IMR-90 (cell line): ENCODE measurements at regions of chr12 and their contacts with region 1.

Region 1: DNA sequence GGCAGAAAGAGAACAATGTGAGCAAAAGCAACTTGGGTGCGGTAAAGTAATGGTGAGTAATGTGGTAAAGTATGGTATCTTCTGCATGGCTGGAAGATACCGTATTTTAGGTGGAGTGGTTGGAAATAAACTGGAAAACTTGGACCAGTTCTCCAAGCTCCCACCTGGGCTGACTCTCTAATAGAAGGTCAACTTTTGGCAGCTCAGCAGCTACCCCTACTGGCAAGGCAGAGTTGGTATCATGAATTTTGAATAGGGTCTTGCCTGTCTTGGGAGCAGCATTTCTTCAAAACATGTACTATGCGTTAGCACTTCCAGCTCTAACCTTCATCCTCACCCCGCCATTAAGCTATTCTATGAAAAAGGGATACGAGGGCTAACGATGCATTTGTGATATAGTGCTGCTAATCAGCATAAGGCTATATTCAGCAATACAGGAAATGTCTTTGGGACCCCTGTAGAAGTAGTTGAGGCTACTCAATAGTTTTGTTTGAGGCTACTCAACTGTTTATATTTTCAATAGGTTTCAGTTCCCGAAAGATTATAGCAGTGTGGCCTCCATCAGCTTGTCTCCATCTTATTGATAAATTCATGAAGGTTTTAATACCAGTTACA is 276.3 kb upstream of the FAR2 start:
- DNase-seq: peak; percentile 67
- ATAC-seq: peak; percentile 70; the same call in 1 of the 2 replicates
- H3K4me3 ChIP-seq: no peak overlapping the region
- H3K27ac ChIP-seq: no peak overlapping the region
- H3K4me1 ChIP-seq: peaks cover 2% of the 10 kb centered on the region; the same call in 1 of the 2 replicates
- H3K27me3 ChIP-seq: no peaks in the 10 kb centered on the region; the same call in 1 of the 2 replicates
- CTCF ChIP-seq: peak; percentile 71
- POLR2A ChIP-seq: no peak
- RAD21 ChIP-seq: peak; percentile 81

Region 2: GRCh38 chr12:27840244-27840999 is 1032.3 kb before region 1 on chr12:
- CTCF ChIA-PET with region 1: no interaction called
- POLR2A ChIA-PET with region 1: no interaction called
- dilution Hi-C with region 1: no loop called
- in situ Hi-C with region 1: no loop called
- intact Hi-C with region 1: loop called (anchors 10 kb)
- DNase-seq: no peak
- ATAC-seq: 0 out of 2 replicates have a peak, but pooled peaks have one; percentile 30
- H3K4me3 ChIP-seq: no peak overlapping the region
- H3K27ac ChIP-seq: no peak overlapping the region
- H3K4me1 ChIP-seq: peaks cover 6% of the 10 kb centered on the region; the same call in 1 of the 2 replicates
- H3K27me3 ChIP-seq: no peaks in the 10 kb centered on the region
- CTCF ChIP-seq: peak; percentile 58
- POLR2A ChIP-seq: no peak
- RAD21 ChIP-seq: peak; percentile 33; the same call in 1 of the 2 replicates

Region 3: GRCh38 chr12:28172434-28173030 is 700.2 kb before region 1 on chr12:
- CTCF ChIA-PET with region 1: interaction called, 3 read pairs
- POLR2A ChIA-PET with region 1: no interaction called
- dilution Hi-C with region 1: no loop called
- in situ Hi-C with region 1: no loop called
- intact Hi-C with region 1: loop called (anchors 1 kb)
- DNase-seq: peak; percentile 68
- ATAC-seq: peak; percentile 93
- H3K4me3 ChIP-seq: no peak overlapping the region
- H3K27ac ChIP-seq: no peak overlapping the region
- H3K4me1 ChIP-seq: no peaks in the 10 kb centered on the region
- H3K27me3 ChIP-seq: no peaks in the 10 kb centered on the region
- CTCF ChIP-seq: peak; percentile 80
- POLR2A ChIP-seq: no peak
- RAD21 ChIP-seq: peak; percentile 91

Region 4: DNA sequence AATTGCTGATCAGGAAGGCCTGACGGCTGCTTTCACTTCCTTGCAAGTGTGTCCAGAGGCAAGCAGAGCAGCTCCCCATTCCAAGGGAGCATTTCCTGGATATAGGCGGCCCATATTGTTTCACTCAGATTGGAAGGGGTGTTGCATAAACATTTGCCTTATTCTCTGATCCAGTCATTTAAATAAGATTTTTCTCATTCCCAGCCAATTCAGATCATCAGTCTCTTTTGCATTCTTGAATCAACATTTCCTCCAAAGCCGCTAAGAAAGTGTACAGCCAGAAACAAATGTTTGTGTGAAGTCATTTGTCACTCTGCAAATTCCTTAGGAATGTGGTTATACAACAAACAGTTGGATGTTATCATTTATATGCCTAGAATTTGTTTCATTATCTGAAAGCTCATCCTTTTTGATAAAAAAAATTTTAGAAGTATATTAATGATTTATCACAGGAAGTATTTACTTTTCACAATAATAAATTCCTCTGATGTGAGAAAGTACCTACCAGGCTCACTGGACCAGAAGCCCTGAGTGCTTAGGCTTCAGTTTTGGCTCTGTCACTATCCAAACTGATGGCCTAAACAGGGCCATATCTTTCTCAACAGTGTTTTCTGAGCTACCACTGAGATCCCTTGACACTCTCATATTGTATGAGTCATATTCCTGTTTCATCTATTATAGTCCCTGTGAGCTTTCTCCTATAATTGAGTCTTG is 302.9 kb before region 1 on chr12:
- CTCF ChIA-PET with region 1: no interaction called
- POLR2A ChIA-PET with region 1: no interaction called
- dilution Hi-C with region 1: no loop called
- in situ Hi-C with region 1: no loop called
- intact Hi-C with region 1: loop called (anchors 2 kb)
- DNase-seq: peak; percentile 80
- ATAC-seq: peak; percentile 82
- H3K4me3 ChIP-seq: no peak overlapping the region
- H3K27ac ChIP-seq: peak overlapping the region; percentile 86
- H3K4me1 ChIP-seq: peaks cover 14% of the 10 kb centered on the region
- H3K27me3 ChIP-seq: no peaks in the 10 kb centered on the region
- CTCF ChIP-seq: no peak
- POLR2A ChIP-seq: no peak
- RAD21 ChIP-seq: no peak

Region 5: DNA sequence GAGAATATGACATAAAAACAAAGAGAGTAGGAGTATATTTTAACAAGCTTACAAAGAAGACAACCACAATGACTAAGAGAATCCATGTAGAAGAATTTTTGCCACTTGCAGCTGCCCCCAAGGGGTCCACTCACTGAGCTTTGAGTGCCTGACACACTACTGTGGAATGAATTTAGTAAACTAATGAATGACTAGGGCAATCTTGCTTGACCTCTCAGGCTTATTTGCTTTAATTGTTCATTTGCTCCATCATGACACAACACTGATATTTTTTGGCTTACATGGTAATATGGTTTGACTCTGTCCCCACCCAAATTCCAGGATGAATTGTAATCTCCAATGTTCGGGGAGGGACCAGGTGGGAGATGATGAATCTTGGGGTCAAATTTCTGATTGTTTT is 27.2 kb after region 1 on chr12:
- CTCF ChIA-PET with region 1: no interaction called
- POLR2A ChIA-PET with region 1: no interaction called
- dilution Hi-C with region 1: no loop called
- in situ Hi-C with region 1: no loop called
- intact Hi-C with region 1: no loop called
- DNase-seq: peak; percentile 97
- ATAC-seq: peak; percentile 97
- H3K4me3 ChIP-seq: no peak overlapping the region
- H3K27ac ChIP-seq: no peak overlapping the region
- H3K4me1 ChIP-seq: peaks cover 3% of the 10 kb centered on the region; the same call in 1 of the 2 replicates
- H3K27me3 ChIP-seq: no peaks in the 10 kb centered on the region
- CTCF ChIP-seq: no peak
- POLR2A ChIP-seq: no peak
- RAD21 ChIP-seq: no peak

Region 6: DNA sequence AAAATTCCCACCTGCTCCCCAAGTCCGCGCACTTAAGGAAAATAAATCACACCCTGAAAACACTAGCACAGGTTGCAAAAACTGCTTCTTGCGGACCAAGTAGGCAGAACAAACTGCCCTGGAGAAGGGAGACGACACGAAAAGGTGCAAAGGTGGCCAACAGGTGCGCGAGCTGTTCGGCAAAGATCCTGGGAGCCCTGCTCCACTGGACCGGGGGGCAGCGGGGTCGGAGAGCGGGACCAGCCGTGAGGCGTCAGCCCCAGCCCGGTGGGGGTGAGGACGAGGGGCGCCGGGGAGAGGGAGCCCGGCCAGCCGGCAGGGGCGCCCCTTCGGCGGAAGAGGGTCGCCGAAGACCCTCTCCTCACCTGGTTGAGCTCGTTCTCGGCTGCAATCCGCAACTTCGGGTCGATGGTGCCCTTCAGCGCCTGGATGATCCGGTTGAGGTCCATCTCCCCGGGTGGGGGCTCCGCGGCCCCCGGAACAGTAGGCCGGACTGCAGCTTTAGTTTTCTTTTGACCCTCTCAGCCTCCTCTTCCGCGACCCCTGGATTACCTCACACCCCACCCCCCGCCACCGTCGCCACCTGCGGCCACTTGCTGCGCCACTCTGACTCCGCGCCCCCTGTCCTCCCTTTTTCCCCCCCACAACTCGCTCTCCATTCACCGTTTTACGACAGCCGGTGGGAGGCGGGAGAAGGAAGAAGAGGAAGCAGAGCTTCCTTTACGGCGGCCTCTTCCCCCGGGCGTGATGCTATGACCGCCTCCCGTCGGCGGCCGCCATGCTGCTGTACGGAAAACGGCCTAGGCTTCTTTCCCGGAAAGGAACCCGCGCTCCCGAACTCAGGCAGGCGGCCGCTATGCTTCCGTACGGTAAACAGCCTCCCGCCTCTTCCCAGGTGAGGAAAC is 1822.7 kb after region 1 on chr12 and contains the start of gene IPO8:
- CTCF ChIA-PET with region 1: no interaction called
- POLR2A ChIA-PET with region 1: interaction called, 20 read pairs
- dilution Hi-C with region 1: no loop called
- in situ Hi-C with region 1: no loop called
- intact Hi-C with region 1: no loop called
- DNase-seq: peak; percentile 89
- ATAC-seq: peak; percentile 91
- H3K4me3 ChIP-seq: peak within 1 kb of the TSS; percentile 100
- H3K27ac ChIP-seq: peak within 1 kb of the TSS; percentile 77
- H3K4me1 ChIP-seq: peaks cover 6% of the 10 kb centered on the region
- H3K27me3 ChIP-seq: no peaks in the 10 kb centered on the region
- CTCF ChIP-seq: peak; percentile 23; the same call in 1 of the 2 replicates
- POLR2A ChIP-seq: no peak; the same call in 1 of the 2 replicates
- RAD21 ChIP-seq: 0 out of 2 replicates have a peak, but pooled peaks have one; percentile 3
- total RNA-seq, gene IPO8: 31.5 and 31.9 TPM in 2 replicates